SK-N-SH (cell line): ENCODE measurements at regions of chr3 and their contacts with region 1.

Region 1: DNA sequence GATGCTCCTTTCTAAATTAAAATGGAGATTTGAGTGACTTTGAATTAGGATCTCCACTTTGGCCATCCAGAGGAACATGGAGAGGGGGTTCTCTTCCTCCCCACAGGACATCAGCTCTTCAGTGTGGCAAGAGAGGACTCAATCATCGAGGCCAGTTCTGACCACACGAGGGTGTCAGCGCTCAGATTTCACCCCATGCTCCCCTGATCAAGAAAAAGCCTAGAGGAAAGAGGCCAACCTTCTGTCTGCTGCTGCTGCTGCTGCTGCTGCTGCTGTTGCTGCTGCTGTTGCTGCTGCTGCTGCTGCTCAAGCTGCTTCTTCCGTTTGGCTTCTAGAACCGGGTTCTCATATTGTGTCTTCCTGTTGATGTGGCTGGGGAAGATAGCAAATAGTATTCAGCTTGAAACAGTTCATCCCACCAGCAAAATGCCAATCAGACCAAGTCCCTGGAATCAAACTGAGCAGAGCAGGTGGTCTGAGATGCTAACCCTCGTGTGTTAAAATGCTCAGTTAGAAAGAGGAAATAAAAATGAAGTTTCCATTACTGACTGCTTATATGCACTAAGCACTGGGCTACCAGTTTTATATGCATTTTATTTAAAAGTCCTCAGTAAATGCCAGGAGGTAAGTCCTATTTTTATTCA is 599.0 kb downstream of the MAGI1 start:
- DNase-seq: peak; percentile 60
- H3K4me3 ChIP-seq: no peak overlapping the region; a peak in 1 of 4 replicates
- H3K27ac ChIP-seq: peak overlapping the region in 1 of 2 experiments; percentile 28; a peak in 2 of 4 replicates
- H3K4me1 ChIP-seq: peaks cover 0 to 11% of the 10 kb centered on the region in 2 experiments; a peak in 2 of 4 replicates
- H3K27me3 ChIP-seq: no peaks in the 10 kb centered on the region
- CTCF ChIP-seq: peak; percentile 69
- EP300 ChIP-seq: no peak
- RAD21 ChIP-seq: peak; percentile 92

Region 2: DNA sequence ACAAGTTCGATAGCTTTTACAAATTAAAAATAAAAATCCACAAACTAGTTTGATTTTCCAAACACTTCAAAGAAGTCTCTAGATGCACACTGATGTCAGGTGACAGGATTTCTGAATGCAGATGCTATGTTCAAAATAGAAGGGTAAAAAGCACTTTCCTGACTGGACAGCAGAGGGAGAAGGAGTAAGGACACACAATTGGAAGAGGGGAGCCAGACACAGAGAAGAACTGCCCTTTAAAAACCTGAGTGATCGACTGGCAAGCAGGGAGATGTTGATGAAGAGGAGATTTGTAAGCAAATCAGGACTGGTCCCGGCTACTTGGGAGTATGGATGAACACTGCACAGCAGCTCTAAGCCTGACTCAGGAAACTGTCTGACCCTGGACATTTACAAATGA is 13.9 kb before region 1 on chr3:
- CTCF ChIA-PET with region 1: interaction called, 22 read pairs
- POLR2A ChIA-PET with region 1: no interaction called
- DNase-seq: peak; percentile 29
- H3K4me3 ChIP-seq: no peak overlapping the region
- H3K27ac ChIP-seq: no peak overlapping the region
- H3K4me1 ChIP-seq: peaks cover 0 to 2% of the 10 kb centered on the region in 2 experiments; a peak in 1 of 4 replicates
- H3K27me3 ChIP-seq: no peaks in the 10 kb centered on the region
- CTCF ChIP-seq: peak; percentile 58
- EP300 ChIP-seq: no peak
- RAD21 ChIP-seq: peak; percentile 56

Region 3: GRCh38 chr3:65564483-65564882 is 124.7 kb after region 1 on chr3:
- CTCF ChIA-PET with region 1: interaction called, 11 read pairs
- POLR2A ChIA-PET with region 1: no interaction called
- DNase-seq: no peak
- H3K4me3 ChIP-seq: no peak overlapping the region
- H3K27ac ChIP-seq: peak overlapping the region in 1 of 2 experiments; percentile 92; a peak in 2 of 4 replicates
- H3K4me1 ChIP-seq: peaks cover 10 to 34% of the 10 kb centered on the region in 2 experiments
- H3K27me3 ChIP-seq: no peaks in the 10 kb centered on the region
- CTCF ChIP-seq: no peak
- EP300 ChIP-seq: no peak
- RAD21 ChIP-seq: no peak

Region 4: GRCh38 chr3:65672871-65673815 is 233.4 kb after region 1 on chr3:
- CTCF ChIA-PET with region 1: interaction called, 139 read pairs
- POLR2A ChIA-PET with region 1: no interaction called
- DNase-seq: peak; percentile 36
- H3K4me3 ChIP-seq: no peak overlapping the region; a peak in 1 of 4 replicates
- H3K27ac ChIP-seq: no peak overlapping the region
- H3K4me1 ChIP-seq: peaks cover 0 to 5% of the 10 kb centered on the region in 2 experiments; a peak in 1 of 4 replicates
- H3K27me3 ChIP-seq: no peaks in the 10 kb centered on the region
- CTCF ChIP-seq: peak; percentile 87
- EP300 ChIP-seq: no peak
- RAD21 ChIP-seq: peak; percentile 84

Region 5: DNA sequence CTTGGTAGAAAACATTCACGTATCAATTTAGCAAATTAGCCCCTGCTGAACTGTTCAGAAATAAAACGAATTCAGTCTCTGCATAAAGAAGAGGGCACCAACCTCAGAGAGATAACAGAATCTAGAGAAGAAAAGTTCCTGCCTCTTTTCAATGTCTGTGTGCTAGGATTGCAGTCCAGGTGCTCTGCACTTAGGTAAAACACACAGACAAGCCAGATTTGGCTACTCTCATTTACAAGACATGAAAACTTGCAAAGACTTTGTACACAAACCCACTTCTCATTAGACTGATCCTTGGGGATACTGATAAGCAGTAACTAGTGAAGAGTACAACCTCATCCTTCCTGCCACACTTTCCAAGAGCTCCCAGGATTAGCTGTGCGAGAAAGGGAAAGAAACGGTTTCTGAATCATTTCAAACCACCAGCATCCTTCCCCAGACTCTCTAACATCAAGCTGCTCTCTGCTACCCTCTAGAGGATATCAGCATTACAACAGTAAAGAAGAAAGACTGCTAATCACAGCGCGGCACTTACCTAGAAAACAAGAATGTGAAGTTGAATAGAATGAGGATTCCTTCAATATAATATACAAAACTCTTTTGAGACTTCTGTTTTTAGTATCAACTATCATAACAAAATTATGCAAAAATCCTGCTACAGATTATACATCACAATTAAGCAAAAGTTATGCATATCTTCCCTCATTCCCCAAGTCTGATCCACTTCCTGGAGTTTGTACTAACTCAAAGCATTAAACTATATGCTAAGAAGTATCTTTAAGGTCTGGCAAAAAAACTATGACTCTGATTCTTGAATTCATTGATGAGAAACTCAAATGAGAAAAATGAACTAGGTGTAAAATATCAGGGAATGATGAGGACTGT is 292.5 kb after region 1 on chr3:
- CTCF ChIA-PET with region 1: interaction called, 81 read pairs
- POLR2A ChIA-PET with region 1: no interaction called
- DNase-seq: peak; percentile 71
- H3K4me3 ChIP-seq: peak overlapping the region in 1 of 2 experiments; percentile 37; a peak in 1 of 4 replicates
- H3K27ac ChIP-seq: peak overlapping the region in 1 of 2 experiments; percentile 41; a peak in 1 of 4 replicates
- H3K4me1 ChIP-seq: peaks cover 11% of the 10 kb centered on the region in 2 experiments
- H3K27me3 ChIP-seq: no peaks in the 10 kb centered on the region
- CTCF ChIP-seq: peak; percentile 85
- EP300 ChIP-seq: no peak
- RAD21 ChIP-seq: peak; percentile 88

Region 6: DNA sequence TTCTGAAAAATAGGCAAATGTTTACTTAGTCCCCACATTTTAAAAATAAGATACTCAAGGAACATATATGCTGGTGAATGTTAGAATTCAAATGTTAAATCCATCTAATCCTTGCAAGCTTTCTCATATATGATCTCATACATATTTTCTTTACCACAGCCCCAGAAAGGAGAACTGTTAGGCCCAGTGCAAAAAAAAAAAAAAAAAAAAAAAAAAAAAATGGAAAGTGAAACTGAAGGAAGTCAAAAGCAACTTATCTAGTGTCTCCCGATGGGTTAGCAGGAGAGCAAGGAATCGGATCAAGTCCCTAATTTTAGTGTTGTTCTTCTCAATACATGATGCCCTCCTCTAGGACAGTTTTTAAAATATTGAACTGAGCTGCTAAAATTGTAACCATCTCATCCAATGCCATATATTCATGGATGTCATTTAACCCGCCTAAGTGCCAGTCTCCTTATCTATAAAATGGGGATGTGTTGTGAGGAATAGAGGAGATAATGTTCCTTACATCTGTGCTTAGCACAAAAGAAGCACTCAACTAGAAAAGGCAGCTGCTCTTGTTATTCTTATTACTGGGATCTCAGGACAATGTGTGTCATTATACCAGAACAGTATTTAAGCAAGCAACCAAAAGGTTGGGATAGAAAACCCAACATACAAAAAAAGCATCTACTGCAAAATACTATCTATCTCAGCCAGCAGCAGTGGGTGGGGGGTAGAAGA is 319.3 kb after region 1 on chr3:
- CTCF ChIA-PET with region 1: interaction called, 12 read pairs
- POLR2A ChIA-PET with region 1: no interaction called
- DNase-seq: no peak
- H3K4me3 ChIP-seq: no peak overlapping the region
- H3K27ac ChIP-seq: no peak overlapping the region
- H3K4me1 ChIP-seq: peaks cover 0 to 2% of the 10 kb centered on the region in 2 experiments; a peak in 2 of 4 replicates
- H3K27me3 ChIP-seq: no peaks in the 10 kb centered on the region
- CTCF ChIP-seq: no peak
- EP300 ChIP-seq: no peak
- RAD21 ChIP-seq: no peak

Region 7: GRCh38 chr3:65861718-65862117 is 422.0 kb after region 1 on chr3:
- CTCF ChIA-PET with region 1: no interaction called
- POLR2A ChIA-PET with region 1: no interaction called
- DNase-seq: no peak
- H3K4me3 ChIP-seq: no peak overlapping the region
- H3K27ac ChIP-seq: no peak overlapping the region
- H3K4me1 ChIP-seq: no peaks in the 10 kb centered on the region
- H3K27me3 ChIP-seq: no peaks in the 10 kb centered on the region
- CTCF ChIP-seq: no peak
- EP300 ChIP-seq: no peak
- RAD21 ChIP-seq: no peak